Activated CD8-positive, alpha-beta T cell treated with anti-CD3 and anti-CD28 coated beads for 36 hours (primary cell): ENCODE measurements at regions of chr1 and their contacts with region 1.

Region 1: DNA sequence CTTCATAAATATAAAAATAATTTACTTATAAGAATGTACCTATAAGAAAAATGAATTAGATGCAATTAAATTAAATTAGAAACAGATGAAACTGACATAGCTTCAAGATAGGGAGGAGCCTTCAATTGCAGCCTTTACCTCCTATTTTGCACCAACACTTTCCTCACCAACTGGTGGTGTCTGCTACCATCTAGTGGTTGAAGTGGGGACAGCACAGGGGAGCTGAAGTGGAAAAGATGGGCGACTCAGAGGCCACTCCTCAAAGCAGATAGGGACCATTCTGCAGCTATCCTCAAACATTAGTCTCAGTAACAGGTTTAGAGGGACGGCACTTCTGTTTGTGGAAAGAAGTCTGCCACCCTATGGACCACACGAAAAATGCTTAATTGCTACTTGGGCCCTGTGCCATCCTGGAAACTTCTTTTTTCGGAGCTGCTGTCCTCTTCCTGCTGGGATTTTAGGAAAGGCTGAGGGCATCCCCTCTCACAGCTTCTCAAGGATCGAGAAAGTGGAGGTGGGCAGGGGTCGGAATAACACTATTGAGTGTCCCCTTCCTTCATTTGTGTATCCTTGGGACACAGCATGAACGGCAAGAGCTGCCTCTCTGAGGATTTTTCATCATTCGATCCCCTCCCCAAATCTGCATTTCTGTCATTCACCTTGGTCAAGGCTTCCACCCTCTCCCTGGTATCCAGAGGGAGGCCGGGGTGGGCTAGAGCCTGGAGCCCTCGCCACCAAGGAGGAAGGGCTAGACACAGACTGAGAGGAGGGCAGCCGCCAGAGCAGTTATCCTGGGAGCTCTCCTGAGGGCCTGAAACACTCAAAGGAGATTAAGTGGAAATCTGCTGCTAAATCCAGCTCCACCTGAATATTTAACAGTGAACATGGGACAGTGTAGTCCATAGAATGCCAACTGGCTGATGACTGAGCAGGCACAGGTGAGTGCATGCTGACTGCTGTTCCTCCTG is 9.6 kb downstream of the PROK1 start:
- DNase-seq: peak; percentile 90
- ATAC-seq: peak; percentile 100
- H3K4me3 Mint-ChIP-seq: no peak overlapping the region
- H3K27ac Mint-ChIP-seq: no peak overlapping the region
- H3K4me1 Mint-ChIP-seq: no peaks in the 10 kb centered on the region
- H3K27me3 Mint-ChIP-seq: no peaks in the 10 kb centered on the region
- CTCF ChIP-seq: peak; percentile 89

Region 2: GRCh38 chr1:110196917-110197765 is 263.4 kb before region 1 on chr1:
- CTCF ChIA-PET with region 1: interaction called, 179 read pairs
- POLR2A ChIA-PET with region 1: interaction called, 3 read pairs
- intact Hi-C with region 1: loop called (anchors 2 kb)
- DNase-seq: peak; percentile 61
- ATAC-seq: peak; percentile 100
- H3K4me3 Mint-ChIP-seq: no peak overlapping the region
- H3K27ac Mint-ChIP-seq: no peak overlapping the region
- H3K4me1 Mint-ChIP-seq: no peaks in the 10 kb centered on the region
- H3K27me3 Mint-ChIP-seq: no peaks in the 10 kb centered on the region
- CTCF ChIP-seq: peak; percentile 88

Region 3: DNA sequence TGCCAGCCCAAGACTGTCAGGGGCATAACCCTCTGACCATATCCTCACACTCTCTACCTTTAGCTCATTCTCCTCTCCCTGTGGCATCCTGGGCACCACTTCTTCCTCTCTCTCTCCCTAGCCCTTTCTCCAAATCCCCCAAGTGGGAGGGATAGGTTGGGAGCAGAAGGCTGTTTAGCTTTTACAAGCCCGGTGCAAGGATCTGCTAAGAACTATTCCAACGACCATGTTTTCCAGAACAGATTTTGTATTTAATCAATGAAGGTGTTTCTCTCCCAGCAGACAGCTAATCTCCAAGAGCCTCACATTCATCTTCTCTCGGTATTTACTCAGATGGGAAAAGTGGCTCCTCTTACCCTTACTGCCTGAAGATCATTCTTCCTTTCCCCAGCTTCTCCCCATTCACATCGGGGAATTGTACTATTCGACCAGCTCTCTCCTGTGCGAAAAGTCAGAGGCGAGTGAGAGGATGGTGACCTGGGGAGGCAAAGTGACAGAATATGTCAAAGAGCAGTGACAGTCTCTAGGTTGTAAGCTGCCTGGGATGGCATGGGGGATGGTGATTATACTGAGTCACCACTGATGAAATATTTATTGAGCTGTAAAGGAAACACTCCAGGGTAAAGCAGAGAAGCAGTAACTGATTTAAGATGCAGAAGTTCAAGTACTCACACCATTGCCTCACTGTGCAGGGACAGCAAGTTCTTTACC is 168.4 kb before region 1 on chr1:
- CTCF ChIA-PET with region 1: no interaction called
- POLR2A ChIA-PET with region 1: no interaction called
- intact Hi-C with region 1: no loop called
- DNase-seq: no peak
- ATAC-seq: no peak
- H3K4me3 Mint-ChIP-seq: no peak overlapping the region
- H3K27ac Mint-ChIP-seq: no peak overlapping the region
- H3K4me1 Mint-ChIP-seq: no peaks in the 10 kb centered on the region
- H3K27me3 Mint-ChIP-seq: no peaks in the 10 kb centered on the region
- CTCF ChIP-seq: no peak

Region 4: GRCh38 chr1:110312188-110313121 is 148.1 kb before region 1 on chr1:
- CTCF ChIA-PET with region 1: interaction called, 34 read pairs
- POLR2A ChIA-PET with region 1: interaction called, 3 read pairs
- intact Hi-C with region 1: no loop called
- DNase-seq: peak; percentile 78
- ATAC-seq: peak; percentile 99
- H3K4me3 Mint-ChIP-seq: no peak overlapping the region
- H3K27ac Mint-ChIP-seq: no peak overlapping the region
- H3K4me1 Mint-ChIP-seq: no peaks in the 10 kb centered on the region
- H3K27me3 Mint-ChIP-seq: no peaks in the 10 kb centered on the region
- CTCF ChIP-seq: peak; percentile 88

Region 5: DNA sequence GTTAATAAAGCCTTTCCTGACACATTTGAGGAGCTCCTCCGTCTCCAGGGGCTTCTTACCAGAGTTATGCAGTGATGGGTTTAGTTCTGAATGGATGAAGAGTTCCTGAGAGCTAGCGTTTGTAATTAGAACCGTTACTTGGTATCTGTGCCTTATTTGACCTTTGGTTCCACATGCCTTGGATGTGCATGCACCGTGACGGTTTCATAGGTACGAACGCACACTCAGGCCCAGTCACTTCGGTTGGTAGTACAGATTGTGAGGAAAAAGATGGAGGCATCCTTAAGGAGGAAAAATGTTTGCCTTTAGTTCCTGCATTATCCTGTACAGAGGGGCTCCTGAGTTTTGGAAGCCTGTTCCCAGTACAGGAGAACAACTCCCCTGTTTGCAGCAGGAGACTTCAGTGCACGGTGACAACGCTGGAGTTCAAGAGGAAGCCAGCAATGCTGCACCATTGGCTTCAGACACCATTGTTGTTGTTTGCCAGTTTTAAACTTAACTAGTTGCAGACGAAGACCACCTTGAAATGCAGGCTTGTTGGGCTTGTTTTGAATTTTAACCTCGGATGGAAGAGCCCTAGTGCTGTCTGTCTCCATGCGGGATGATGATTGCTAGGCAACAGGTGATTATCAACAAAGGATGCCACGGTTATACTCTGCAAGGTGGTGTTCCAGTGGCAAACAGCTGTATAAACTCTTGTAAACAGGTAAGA is 113.2 kb before region 1 on chr1:
- CTCF ChIA-PET with region 1: interaction called, 10 read pairs
- POLR2A ChIA-PET with region 1: no interaction called
- intact Hi-C with region 1: no loop called
- DNase-seq: no peak
- ATAC-seq: no peak
- H3K4me3 Mint-ChIP-seq: peak overlapping the region; percentile 18
- H3K27ac Mint-ChIP-seq: no peak overlapping the region
- H3K4me1 Mint-ChIP-seq: peaks cover 86% of the 10 kb centered on the region
- H3K27me3 Mint-ChIP-seq: no peaks in the 10 kb centered on the region
- CTCF ChIP-seq: no peak

Region 6: GRCh38 chr1:110412576-110412975 is 48.0 kb before region 1 on chr1:
- CTCF ChIA-PET with region 1: interaction called, 89 read pairs
- POLR2A ChIA-PET with region 1: interaction called, 4 read pairs
- intact Hi-C with region 1: loop called (anchors 5 kb)
- DNase-seq: peak; percentile 75
- ATAC-seq: peak; percentile 52
- H3K4me3 Mint-ChIP-seq: no peak overlapping the region
- H3K27ac Mint-ChIP-seq: no peak overlapping the region
- H3K4me1 Mint-ChIP-seq: peaks cover 10% of the 10 kb centered on the region
- H3K27me3 Mint-ChIP-seq: no peaks in the 10 kb centered on the region
- CTCF ChIP-seq: peak; percentile 72

Region 7: DNA sequence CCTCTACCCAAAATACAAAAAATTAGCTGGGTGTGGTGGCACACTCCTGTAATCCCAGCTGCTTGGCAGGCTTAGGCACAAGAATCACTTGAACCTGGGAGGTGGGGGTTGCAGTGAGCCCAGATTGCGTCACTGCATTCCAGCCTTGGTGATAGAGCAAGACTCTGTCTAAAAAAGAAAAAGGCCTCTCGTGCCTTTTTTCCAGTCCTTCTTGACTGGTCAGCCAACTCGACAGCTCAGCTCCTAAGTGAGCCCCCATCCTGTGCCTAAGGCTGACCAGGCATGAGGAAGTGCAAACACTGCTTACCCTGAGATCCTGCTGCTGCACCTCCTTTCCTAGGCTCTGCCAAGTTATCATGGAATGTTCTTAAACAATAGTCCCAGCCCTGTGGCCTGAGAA is 19.7 kb before region 1 on chr1:
- CTCF ChIA-PET with region 1: interaction called, 41 read pairs
- POLR2A ChIA-PET with region 1: no interaction called
- intact Hi-C with region 1: no loop called
- DNase-seq: no peak
- ATAC-seq: no peak
- H3K4me3 Mint-ChIP-seq: no peak overlapping the region
- H3K27ac Mint-ChIP-seq: no peak overlapping the region
- H3K4me1 Mint-ChIP-seq: no peaks in the 10 kb centered on the region
- H3K27me3 Mint-ChIP-seq: peaks cover 2% of the 10 kb centered on the region
- CTCF ChIP-seq: no peak

Region 8: GRCh38 chr1:110542725-110543124 is 82.2 kb after region 1 on chr1:
- CTCF ChIA-PET with region 1: no interaction called
- POLR2A ChIA-PET with region 1: no interaction called
- intact Hi-C with region 1: no loop called
- DNase-seq: peak; percentile 12
- ATAC-seq: no peak
- H3K4me3 Mint-ChIP-seq: no peak overlapping the region
- H3K27ac Mint-ChIP-seq: no peak overlapping the region
- H3K4me1 Mint-ChIP-seq: no peaks in the 10 kb centered on the region
- H3K27me3 Mint-ChIP-seq: peaks cover 6% of the 10 kb centered on the region
- CTCF ChIP-seq: no peak

Region 9: GRCh38 chr1:110600716-110601115 is 140.2 kb after region 1 on chr1:
- CTCF ChIA-PET with region 1: no interaction called
- POLR2A ChIA-PET with region 1: no interaction called
- intact Hi-C with region 1: no loop called
- DNase-seq: no peak
- ATAC-seq: no peak
- H3K4me3 Mint-ChIP-seq: no peak overlapping the region
- H3K27ac Mint-ChIP-seq: no peak overlapping the region
- H3K4me1 Mint-ChIP-seq: no peaks in the 10 kb centered on the region
- H3K27me3 Mint-ChIP-seq: peaks cover 21% of the 10 kb centered on the region
- CTCF ChIP-seq: no peak

Region 10: GRCh38 chr1:110746579-110747160 is 286.1 kb after region 1 on chr1:
- CTCF ChIA-PET with region 1: no interaction called
- POLR2A ChIA-PET with region 1: no interaction called
- intact Hi-C with region 1: no loop called
- DNase-seq: peak; percentile 70
- ATAC-seq: peak; percentile 47
- H3K4me3 Mint-ChIP-seq: no peak overlapping the region
- H3K27ac Mint-ChIP-seq: no peak overlapping the region
- H3K4me1 Mint-ChIP-seq: no peaks in the 10 kb centered on the region
- H3K27me3 Mint-ChIP-seq: peaks cover 6% of the 10 kb centered on the region
- CTCF ChIP-seq: no peak